ENCODE measurements at regions of chr16 and their contacts with region 1.

Region 1: DNA sequence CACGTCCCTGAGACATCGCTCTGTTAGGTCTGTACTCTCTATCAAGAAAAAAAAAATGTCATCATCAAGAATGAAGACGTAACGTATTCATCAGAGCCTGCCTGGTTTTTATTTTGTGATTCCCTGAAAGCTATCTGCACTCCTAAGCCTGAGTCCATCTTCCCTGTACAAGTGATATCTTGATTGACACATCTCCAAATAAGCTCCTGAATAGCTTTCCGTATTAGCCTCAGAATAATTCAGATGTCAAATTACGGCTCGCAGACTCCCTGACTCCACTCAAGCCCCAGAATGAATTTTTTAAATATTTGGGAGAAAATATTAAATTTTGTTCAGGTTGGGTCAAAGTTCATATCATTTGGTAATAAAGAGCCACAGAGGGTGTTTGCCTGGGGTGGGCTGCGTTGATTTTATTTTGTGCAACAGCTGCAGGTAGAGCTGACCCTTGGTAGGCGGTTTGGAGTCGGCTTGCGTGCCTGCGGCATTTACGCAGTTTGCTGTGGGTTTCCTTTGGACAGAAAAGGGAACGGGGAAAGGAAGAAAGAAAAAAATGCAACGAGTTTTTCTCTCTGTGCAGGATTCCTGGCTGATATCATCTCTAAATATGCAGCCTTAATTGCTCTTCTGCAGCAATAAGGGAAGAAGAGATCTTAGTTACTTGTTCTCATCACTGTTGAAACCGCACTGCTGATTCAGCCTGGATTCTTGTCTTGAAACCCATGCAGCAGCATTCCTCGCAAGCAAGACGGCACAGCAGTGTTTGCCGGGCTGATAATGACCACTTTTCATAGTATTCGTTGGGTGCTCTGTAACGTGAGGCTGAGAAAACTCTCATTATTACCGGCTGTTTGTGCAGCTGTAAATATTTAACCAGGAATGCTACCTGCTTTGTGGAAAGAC is 114.7 kb downstream of the IRX3 start:
- DNase-seq: peak; percentile 19
- H3K4me3 ChIP-seq: no peak overlapping the region
- H3K27ac ChIP-seq: no peak overlapping the region
- H3K4me1 ChIP-seq: peaks cover 8% of the 10 kb centered on the region; the same call in 1 of the 2 replicates
- H3K27me3 ChIP-seq: 0 out of 2 replicates have a peak, but pooled peaks cover 4% of the 10 kb centered on the region

Region 2: GRCh38 chr16:53773150-53773846 is 398.6 kb before region 1 on chr16:
- in situ Hi-C with region 1: loop called (anchors 10 kb)
- DNase-seq: peak; percentile 86
- H3K4me3 ChIP-seq: 0 out of 2 replicates have a peak overlapping the region, but pooled peaks have one; percentile 18
- H3K27ac ChIP-seq: peak overlapping the region; percentile 42
- H3K4me1 ChIP-seq: peaks cover 98% of the 10 kb centered on the region
- H3K27me3 ChIP-seq: no peaks in the 10 kb centered on the region